ENCODE measurements at regions of chr14 and their contacts with region 1.

Region 1: GRCh38 chr14:85549697-85550096 is 19.8 kb downstream of the FLRT2 start:
- DNase-seq: no peak
- H3K4me3 Mint-ChIP-seq: no peak overlapping the region
- H3K27ac Mint-ChIP-seq: no peak overlapping the region
- H3K4me1 Mint-ChIP-seq: peaks cover 11% of the 10 kb centered on the region
- H3K27me3 Mint-ChIP-seq: no peaks in the 10 kb centered on the region
- CTCF ChIP-seq: no peak

Region 2: DNA sequence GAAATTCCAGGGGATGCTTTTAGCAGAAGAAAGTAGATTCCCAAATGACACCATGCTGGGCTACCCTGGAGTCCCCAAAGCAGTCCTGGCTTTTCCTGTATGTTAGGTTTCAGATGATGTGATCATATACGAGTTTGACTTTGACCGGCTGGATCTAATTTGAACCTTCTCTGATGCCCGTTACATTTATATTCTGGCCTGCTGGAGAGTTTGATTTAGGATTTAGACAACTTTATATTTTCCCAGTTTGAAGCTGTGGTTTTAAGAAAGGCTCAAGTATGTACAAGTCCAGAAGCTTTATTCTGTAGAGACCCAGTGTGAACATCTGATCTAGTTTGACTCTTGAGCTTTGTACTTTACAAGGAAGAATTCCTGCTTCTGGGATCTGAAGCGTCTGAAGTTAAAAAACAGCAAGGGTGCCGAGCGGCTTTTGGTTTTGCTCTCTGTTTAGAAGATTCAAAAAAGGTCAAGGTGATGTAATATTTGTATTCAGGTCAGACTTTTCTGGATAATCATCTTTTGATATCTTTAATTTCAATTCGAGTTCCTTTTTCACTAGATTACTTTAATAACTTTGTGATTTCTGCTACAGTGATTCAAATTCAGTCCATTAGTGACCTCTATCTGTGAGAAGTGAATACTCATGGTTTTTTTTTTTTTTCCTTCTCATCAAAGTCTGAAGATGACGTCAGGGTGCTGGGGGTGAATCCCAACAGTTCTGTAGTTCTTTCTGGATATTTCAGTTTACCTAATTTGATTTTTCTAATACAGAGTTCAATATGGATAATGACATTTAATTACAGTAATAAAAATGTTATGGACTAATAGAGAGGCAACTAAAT is 13.5 kb before region 1 on chr14:
- CTCF ChIA-PET with region 1: interaction called, 7 read pairs
- POLR2A ChIA-PET with region 1: interaction called, 11 read pairs
- intact Hi-C with region 1: no loop called
- DNase-seq: peak; percentile 62
- H3K4me3 Mint-ChIP-seq: peak overlapping the region; percentile 86
- H3K27ac Mint-ChIP-seq: no peak overlapping the region
- H3K4me1 Mint-ChIP-seq: peaks cover 35% of the 10 kb centered on the region
- H3K27me3 Mint-ChIP-seq: no peaks in the 10 kb centered on the region
- CTCF ChIP-seq: peak; percentile 33

Measured in MCF 10A (cell line).